Heart left ventricle (tissue), 16 donors: ENCODE measurements at regions of chr10 and their contacts with region 1.

Region 1: GRCh38 chr10:59580026-59580863 is 129.4 kb downstream of the SLC16A9 start:
- DNase-seq: no peak
- ATAC-seq: peak in 2 of 4 donors; percentile 54 to 57
- H3K4me3 ChIP-seq: no peak overlapping the region
- H3K27ac ChIP-seq: peak overlapping the region in 4 of 12 donors; percentile 21 to 51 (median 36)
- H3K4me1 ChIP-seq: peaks cover 0 to 21% (median 0%) of the 10 kb centered on the region in 12 donors
- H3K27me3 ChIP-seq: no peaks in the 10 kb centered on the region
- CTCF ChIP-seq: peak; percentile 31 to 71 (median 46)
- POLR2A ChIP-seq: no peak

Region 2: GRCh38 chr10:58952747-58953466 is 627.3 kb before region 1 on chr10:
- intact Hi-C with region 1: loop called in 2 of 10 experiments (anchors 10 kb)
- DNase-seq: peak in 2 of 5 donors; percentile 23 to 36
- ATAC-seq: peak; percentile 38 to 76 (median 70)
- H3K4me3 ChIP-seq: peak overlapping the region in 1 of 12 donors; percentile 11
- H3K27ac ChIP-seq: peak overlapping the region in 7 of 12 donors; percentile 32 to 88 (median 71)
- H3K4me1 ChIP-seq: peaks cover 0 to 13% (median 0%) of the 10 kb centered on the region in 12 donors
- H3K27me3 ChIP-seq: no peaks in the 10 kb centered on the region
- CTCF ChIP-seq: peak; percentile 61 to 86 (median 78)
- POLR2A ChIP-seq: no peak

Region 3: DNA sequence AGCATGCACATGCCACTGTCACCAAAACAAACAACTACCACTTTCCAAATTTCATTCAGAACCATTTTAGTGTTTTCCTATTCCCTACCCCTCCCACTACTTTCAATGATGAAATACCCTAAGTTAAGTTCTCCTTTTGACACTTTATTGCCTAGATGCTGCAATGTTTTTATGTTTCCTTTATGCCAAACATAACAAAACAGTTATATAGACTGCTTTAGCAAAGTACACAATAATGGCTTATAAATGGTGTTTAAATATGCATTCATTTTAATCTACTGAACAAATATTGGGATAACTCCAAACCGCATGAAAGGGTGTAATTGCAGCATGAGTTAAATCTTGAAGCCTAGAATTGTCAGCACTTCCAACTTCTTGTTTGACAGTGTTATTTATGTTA is 334.6 kb before region 1 on chr10:
- intact Hi-C with region 1: loop called (anchors 1 to 5 kb)
- DNase-seq: no peak
- ATAC-seq: no peak
- H3K4me3 ChIP-seq: no peak overlapping the region
- H3K27ac ChIP-seq: no peak overlapping the region
- H3K4me1 ChIP-seq: peaks cover 0 to 4% (median 0%) of the 10 kb centered on the region in 12 donors
- H3K27me3 ChIP-seq: no peaks in the 10 kb centered on the region
- CTCF ChIP-seq: no peak
- POLR2A ChIP-seq: no peak

Region 4: DNA sequence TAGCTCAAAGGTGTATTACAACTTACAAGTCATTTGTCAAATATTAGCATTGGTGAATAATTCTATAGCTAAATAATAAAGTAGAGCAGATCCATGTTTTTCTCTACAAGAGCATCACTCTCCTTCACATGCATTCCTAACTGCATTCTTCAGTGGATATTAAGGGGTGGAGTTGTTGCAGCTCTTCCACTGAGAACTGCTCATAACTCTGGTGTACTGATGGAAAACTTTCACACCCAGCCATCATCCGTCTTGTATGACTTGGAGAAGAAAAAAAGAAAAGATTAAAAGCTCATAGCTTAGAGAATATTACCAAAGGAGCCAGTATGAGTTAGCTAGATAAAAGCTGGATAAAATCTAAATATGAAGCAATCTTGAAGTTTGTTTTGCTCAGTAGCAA is 207.7 kb before region 1 on chr10:
- intact Hi-C with region 1: loop called in 2 of 10 experiments (anchors 10 kb)
- DNase-seq: no peak
- ATAC-seq: peak in 1 of 4 donors; percentile 37
- H3K4me3 ChIP-seq: no peak overlapping the region
- H3K27ac ChIP-seq: peak overlapping the region in 6 of 12 donors; percentile 1 to 37 (median 8)
- H3K4me1 ChIP-seq: peaks cover 0 to 35% (median 8%) of the 10 kb centered on the region in 12 donors
- H3K27me3 ChIP-seq: no peaks in the 10 kb centered on the region
- CTCF ChIP-seq: no peak
- POLR2A ChIP-seq: no peak

Region 5: GRCh38 chr10:59524348-59524747 is 55.9 kb before region 1 on chr10:
- intact Hi-C with region 1: loop called in 1 of 10 experiments (anchors 10 kb)
- DNase-seq: no peak
- ATAC-seq: peak in 2 of 4 donors; percentile 51 to 59
- H3K4me3 ChIP-seq: no peak overlapping the region
- H3K27ac ChIP-seq: peak overlapping the region in 6 of 12 donors; percentile 4 to 68 (median 53)
- H3K4me1 ChIP-seq: peaks cover 0 to 13% (median 0%) of the 10 kb centered on the region in 12 donors
- H3K27me3 ChIP-seq: no peaks in the 10 kb centered on the region
- CTCF ChIP-seq: no peak
- POLR2A ChIP-seq: no peak